Psoas muscle (tissue), 8 donors: ENCODE measurements at regions of chr15 and their contacts with region 1.

Region 1: DNA sequence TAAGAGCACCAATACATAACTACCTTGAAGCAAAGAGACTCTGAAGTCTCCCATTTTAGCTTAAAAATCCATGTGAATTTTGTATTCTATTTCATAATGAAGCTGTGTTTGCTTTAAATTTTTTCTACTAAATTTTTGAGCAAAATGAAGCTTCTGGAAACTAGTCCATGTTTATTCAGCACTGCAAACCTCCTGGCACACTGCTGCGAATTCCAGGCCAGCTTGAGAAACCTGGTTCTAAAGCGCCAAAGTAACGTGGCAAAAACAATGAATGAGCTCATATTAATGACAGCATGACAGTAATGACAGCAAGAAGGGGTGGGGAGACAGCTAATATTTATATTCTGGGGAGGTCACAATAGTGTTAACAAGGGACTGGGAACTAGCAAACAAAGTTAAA is 25.7 kb downstream of the CEP152 start:
- DNase-seq: peak; percentile 37 to 65
- ATAC-seq: no peak
- H3K4me3 ChIP-seq: no peak overlapping the region
- H3K27ac ChIP-seq: no peak overlapping the region
- H3K4me1 ChIP-seq: no peaks in the 10 kb centered on the region
- H3K27me3 ChIP-seq: no peaks in the 10 kb centered on the region
- CTCF ChIP-seq: no peak

Region 2: DNA sequence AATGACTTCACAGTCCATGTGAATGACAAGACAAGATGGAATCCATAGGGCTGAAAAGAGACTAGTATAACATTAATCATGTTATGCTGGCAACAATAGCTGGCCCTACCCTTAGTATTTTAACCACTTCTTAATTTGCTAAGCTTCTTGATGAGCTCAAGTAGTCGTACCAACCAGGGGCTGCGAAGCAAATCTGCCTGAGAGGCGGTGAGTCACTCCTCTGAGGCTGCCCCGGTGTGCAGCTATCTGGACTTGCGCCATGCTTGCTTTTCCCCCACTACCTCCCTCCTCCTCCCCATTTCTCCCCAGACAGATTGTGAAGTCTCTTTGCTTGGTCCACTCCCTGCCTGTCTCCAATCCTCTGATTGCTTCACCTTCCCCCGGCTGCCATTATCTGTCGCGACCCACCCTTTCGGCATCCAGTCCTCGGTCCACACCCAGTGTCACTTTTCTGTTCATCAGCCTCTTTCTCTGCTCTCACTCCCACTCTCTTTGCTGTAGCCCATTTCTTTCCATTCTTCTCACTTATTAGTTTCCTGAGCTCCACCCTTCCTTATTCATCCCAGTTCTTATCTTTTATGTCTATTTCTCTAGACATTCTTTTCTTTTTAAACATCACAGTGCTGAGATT is 411.3 kb before region 1 on chr15:
- intact Hi-C with region 1: loop called in 1 of 2 experiments (anchors 10 kb)
- DNase-seq: peak; percentile 48 to 56
- ATAC-seq: no peak
- H3K4me3 ChIP-seq: no peak overlapping the region
- H3K27ac ChIP-seq: no peak overlapping the region
- H3K4me1 ChIP-seq: no peaks in the 10 kb centered on the region
- H3K27me3 ChIP-seq: no peaks in the 10 kb centered on the region
- CTCF ChIP-seq: no peak